ENCODE measurements at regions of chr1 and their contacts with region 1.

Region 1: GRCh38 chr1:205631727-205632373 is at the start of gene ELK4:
- DNase-seq: peak; percentile 99
- ATAC-seq: peak; percentile 99
- total RNA-seq, gene ELK4: 31.1 TPM

Region 2: GRCh38 chr1:205430696-205431305 is 201.0 kb before region 1 on chr1:
- intact Hi-C with region 1: no loop called
- DNase-seq: peak; percentile 71
- ATAC-seq: peak; percentile 90

Region 3: DNA sequence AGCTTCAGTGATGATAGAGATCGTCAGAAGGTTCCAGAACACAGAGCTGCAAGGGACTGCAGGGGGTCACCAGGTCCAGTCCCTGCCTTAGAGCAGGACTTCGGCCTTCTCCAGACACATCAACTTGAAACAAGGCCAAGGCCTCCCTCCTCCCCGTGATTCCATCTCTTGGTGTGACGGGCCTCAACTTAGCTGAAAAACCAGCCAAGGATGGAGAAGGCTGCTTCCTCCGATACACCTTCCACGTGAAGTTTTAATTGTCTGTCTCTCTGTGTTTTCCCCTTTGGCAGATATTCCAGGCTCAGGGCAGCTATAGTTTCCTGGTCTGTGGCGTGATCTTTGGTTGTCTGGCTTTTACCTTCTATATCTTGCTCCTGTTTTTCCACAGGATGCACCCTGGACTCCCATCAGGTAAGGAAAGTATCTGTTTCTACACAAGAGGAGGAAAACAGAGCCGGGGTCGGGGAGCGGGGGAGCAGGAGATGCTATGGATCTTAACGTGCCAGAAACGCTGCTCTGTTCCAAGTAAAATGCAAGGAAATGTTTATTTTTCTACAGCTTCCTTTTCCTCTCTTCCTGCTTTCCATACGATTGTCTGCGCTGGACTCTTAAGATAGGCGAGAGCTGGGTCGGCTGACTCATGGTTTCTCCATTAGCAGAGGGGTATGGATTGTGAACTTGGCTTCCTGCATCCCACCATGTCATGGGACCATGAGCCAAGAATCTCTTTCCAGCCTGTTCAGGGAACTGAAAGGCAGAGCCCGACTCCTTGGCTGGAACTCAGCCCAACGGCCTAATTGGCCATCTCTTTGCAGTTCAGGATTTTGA is 32.8 kb before region 1 on chr1:
- intact Hi-C with region 1: loop called (anchors 5 kb)
- DNase-seq: peak; percentile 81
- ATAC-seq: peak; percentile 90